B cell (primary cell): ENCODE measurements at regions of chr4 and their contacts with region 1.

Region 1: DNA sequence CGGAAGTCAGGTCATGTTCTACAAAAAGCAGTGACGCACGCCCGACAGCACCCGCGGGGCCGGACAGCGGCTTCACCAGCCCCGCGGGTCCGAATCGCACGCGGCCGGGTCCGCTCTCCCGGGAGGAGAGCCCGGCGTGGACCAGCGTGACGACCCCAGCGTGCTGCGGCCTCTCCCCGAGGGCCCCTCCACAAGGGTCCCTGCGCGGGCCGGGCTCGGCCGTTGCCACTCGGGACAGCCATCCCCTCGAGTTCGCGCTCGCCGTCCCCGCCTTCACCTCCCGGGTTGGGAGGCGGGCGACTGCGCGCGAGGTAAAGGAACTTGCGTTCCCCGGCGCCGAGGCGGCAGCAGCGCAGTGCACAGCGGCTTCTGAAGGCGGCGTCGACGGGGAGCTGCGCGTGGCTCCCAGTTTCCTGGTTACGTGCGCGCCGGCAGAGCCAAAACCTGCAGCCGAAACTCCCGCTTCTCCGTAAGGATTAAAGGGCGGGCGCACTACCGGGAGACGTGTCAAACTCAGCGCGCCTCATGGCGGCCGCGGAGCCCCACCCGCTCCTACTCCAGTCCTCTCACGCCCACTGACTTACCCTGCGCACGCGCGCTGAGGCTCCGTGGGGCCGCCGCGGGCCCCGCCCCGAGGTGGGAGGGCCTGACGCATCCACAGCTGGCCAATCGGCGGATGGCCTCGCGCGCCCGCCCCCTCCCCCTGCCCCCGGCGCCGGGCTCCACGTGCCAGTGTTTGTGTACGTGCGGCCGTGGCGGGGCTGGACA is 416 bp upstream of the LRP2BP start:
- DNase-seq: peak; percentile 97
- ATAC-seq: peak; percentile 87
- H3K4me3 ChIP-seq: peak overlapping the region; percentile 79 to 98 (median 89)
- H3K4me3 Mint-ChIP-seq: peak overlapping the region; percentile 92
- H3K27ac ChIP-seq: peak overlapping the region; percentile 97 to 99
- H3K27ac Mint-ChIP-seq: peak overlapping the region; percentile 94
- H3K4me1 ChIP-seq: peaks cover 26% of the 10 kb centered on the region in 2 donors
- H3K4me1 Mint-ChIP-seq: peaks cover 54% of the 10 kb centered on the region
- H3K27me3 ChIP-seq: no peaks in the 10 kb centered on the region
- H3K27me3 Mint-ChIP-seq: no peaks in the 10 kb centered on the region
- CTCF ChIP-seq: no peak

Region 2: DNA sequence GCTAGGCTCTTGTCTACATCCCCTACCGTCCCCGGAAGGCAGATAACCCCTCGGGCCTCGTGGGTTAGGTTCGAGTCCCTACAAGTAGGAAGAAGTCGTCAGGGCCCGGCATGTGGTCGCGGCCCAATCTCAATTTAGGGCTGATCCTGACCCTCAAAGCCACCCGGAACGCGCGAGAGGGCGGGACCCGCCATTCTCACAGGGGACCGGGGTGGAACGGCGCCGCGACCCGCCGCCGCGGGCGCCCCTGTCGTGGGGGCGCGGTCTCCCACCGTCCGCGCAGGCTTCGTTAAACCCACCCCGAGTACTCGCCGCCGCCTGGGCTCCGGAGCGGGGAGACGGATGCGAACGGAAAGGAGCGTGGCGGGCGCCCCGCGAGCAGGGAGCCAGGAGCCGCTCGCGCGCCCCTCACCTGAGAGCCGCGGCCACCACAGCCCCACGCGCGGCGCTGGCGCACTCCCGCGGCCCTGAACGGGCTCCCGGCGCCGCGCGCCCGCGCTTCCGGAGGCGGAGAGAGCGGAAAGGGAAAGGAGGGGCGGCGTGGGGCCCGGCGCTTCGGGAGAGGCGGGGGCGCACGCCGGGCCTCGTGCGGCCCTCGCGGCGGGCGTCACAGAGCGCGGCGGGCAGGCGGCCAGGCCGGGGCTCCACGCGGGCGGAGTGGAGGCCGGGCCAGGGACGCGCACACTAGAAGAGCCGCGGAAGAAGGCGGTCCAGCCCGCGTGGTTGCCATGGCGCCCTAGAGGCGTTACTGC is 192.5 kb before region 1 on chr4 and contains the start of gene CFAP97:
- CTCF ChIA-PET with region 1: no interaction called
- POLR2A ChIA-PET with region 1: no interaction called
- intact Hi-C with region 1: loop called (anchors 2 kb)
- DNase-seq: peak; percentile 90
- ATAC-seq: peak; percentile 81
- H3K4me3 ChIP-seq: peak within 1 kb of the TSS; percentile 58 to 73 (median 71)
- H3K4me3 Mint-ChIP-seq: peak within 1 kb of the TSS; percentile 97
- H3K27ac ChIP-seq: peak within 1 kb of the TSS; percentile 76 to 90
- H3K27ac Mint-ChIP-seq: peak within 1 kb of the TSS; percentile 98
- H3K4me1 ChIP-seq: peaks cover 31 to 45% of the 10 kb centered on the region in 2 donors
- H3K4me1 Mint-ChIP-seq: peaks cover 45% of the 10 kb centered on the region
- H3K27me3 ChIP-seq: no peaks in the 10 kb centered on the region
- H3K27me3 Mint-ChIP-seq: no peaks in the 10 kb centered on the region
- CTCF ChIP-seq: peak; percentile 10
- total RNA-seq, gene CFAP97: 32.0 and 32.4 TPM in 2 replicates

Region 3: GRCh38 chr4:185425647-185426352 is 29.7 kb after region 1 on chr4 and contains the start of gene UFSP2:
- CTCF ChIA-PET with region 1: interaction called, 15 read pairs
- POLR2A ChIA-PET with region 1: interaction called, 19 read pairs
- intact Hi-C with region 1: loop called (anchors 1 kb)
- DNase-seq: peak; percentile 98
- ATAC-seq: peak; percentile 88
- H3K4me3 ChIP-seq: peak within 1 kb of the TSS; percentile 78 to 99 (median 88)
- H3K4me3 Mint-ChIP-seq: peak within 1 kb of the TSS; percentile 86
- H3K27ac ChIP-seq: peak within 1 kb of the TSS; percentile 98 to 100
- H3K27ac Mint-ChIP-seq: peak within 1 kb of the TSS; percentile 99
- H3K4me1 ChIP-seq: peaks cover 13% of the 10 kb centered on the region in 2 donors
- H3K4me1 Mint-ChIP-seq: peaks cover 15% of the 10 kb centered on the region
- H3K27me3 ChIP-seq: no peaks in the 10 kb centered on the region
- H3K27me3 Mint-ChIP-seq: peaks cover 4% of the 10 kb centered on the region
- CTCF ChIP-seq: no peak
- total RNA-seq, gene UFSP2: 20.6 and 24.4 TPM in 2 replicates

Region 4: DNA sequence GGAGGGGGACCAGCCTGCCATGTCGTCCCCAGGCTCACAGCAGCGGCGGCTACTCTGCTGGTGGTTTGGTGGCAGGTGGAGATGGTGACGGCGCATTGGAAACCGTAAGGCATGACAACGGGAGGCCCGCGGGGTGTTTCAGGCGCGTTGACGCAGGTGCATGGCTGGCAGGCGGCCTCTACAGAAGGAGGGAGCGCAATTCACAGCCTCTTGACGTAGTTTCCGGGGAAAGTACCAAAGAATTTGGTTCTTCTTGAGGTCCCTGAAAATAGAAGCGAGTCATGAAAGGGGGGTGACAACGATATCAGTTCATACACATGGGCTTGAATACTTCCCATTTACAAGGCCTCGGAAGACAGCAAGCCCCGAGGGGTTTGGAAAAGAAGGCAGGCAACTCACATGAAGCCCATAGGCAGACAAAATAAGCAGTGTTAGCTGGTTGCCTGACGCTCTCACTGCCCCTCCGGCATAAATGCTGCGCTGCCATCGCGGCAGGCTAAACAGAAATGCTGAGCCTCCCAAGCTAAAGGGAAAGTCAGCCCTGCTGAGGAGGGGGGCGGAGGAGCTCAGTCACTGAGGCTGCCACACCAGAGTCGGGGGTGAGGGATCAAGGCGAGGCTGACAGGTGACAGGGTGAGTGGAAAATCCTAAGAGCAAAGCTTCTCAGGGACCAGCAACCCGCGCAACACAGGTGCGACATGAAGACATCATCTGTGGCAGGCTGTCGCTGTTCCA is 191.5 kb after region 1 on chr4:
- CTCF ChIA-PET with region 1: no interaction called
- POLR2A ChIA-PET with region 1: no interaction called
- intact Hi-C with region 1: loop called (anchors 1 kb)
- DNase-seq: peak; percentile 91
- ATAC-seq: peak; percentile 92
- H3K4me3 ChIP-seq: peak overlapping the region in 4 of 5 experiments; percentile 18 to 59 (median 40)
- H3K4me3 Mint-ChIP-seq: peak overlapping the region; percentile 88
- H3K27ac ChIP-seq: peak overlapping the region in 1 of 2 donors; percentile 58
- H3K27ac Mint-ChIP-seq: peak overlapping the region; percentile 93
- H3K4me1 ChIP-seq: peaks cover 12 to 13% of the 10 kb centered on the region in 2 donors
- H3K4me1 Mint-ChIP-seq: peaks cover 27% of the 10 kb centered on the region
- H3K27me3 ChIP-seq: peaks cover 0 to 13% (median 12%) of the 10 kb centered on the region in 4 experiments
- H3K27me3 Mint-ChIP-seq: peaks cover 49% of the 10 kb centered on the region
- CTCF ChIP-seq: no peak

Region 5: GRCh38 chr4:186191200-186192065 is 795.3 kb after region 1 on chr4 and contains the start of gene CYP4V2:
- CTCF ChIA-PET with region 1: no interaction called
- POLR2A ChIA-PET with region 1: no interaction called
- intact Hi-C with region 1: loop called (anchors 10 kb)
- DNase-seq: peak; percentile 91
- ATAC-seq: peak; percentile 84
- H3K4me3 ChIP-seq: peak within 1 kb of the TSS; percentile 66 to 95 (median 90)
- H3K4me3 Mint-ChIP-seq: peak within 1 kb of the TSS; percentile 94
- H3K27ac ChIP-seq: peak within 1 kb of the TSS; percentile 89 to 91
- H3K27ac Mint-ChIP-seq: peak within 1 kb of the TSS; percentile 96
- H3K4me1 ChIP-seq: peaks cover 17 to 21% of the 10 kb centered on the region in 2 donors
- H3K4me1 Mint-ChIP-seq: peaks cover 27% of the 10 kb centered on the region
- H3K27me3 ChIP-seq: no peaks in the 10 kb centered on the region
- H3K27me3 Mint-ChIP-seq: no peaks in the 10 kb centered on the region
- CTCF ChIP-seq: peak; percentile 51
- total RNA-seq, gene CYP4V2: 18.3 and 19.7 TPM in 2 replicates